A673 (cell line): ENCODE measurements at regions of chr16 and their contacts with region 1.

Region 1: GRCh38 chr16:3027945-3028712 is 4.3 kb downstream of the THOC6 start:
- DNase-seq: peak; percentile 90
- H3K4me3 ChIP-seq: no peak overlapping the region
- H3K27ac ChIP-seq: no peak overlapping the region
- H3K4me1 ChIP-seq: peaks cover 17% of the 10 kb centered on the region
- H3K27me3 ChIP-seq: peaks cover 31% of the 10 kb centered on the region
- CTCF ChIP-seq: peak; percentile 93

Region 2: GRCh38 chr16:3003582-3004302 is 24.4 kb before region 1 on chr16:
- CTCF ChIA-PET with region 1: interaction called, 15 read pairs
- POLR2A ChIA-PET with region 1: no interaction called
- intact Hi-C with region 1: loop called (anchors 1 kb)
- DNase-seq: peak; percentile 99
- H3K4me3 ChIP-seq: no peak overlapping the region
- H3K27ac ChIP-seq: no peak overlapping the region
- H3K4me1 ChIP-seq: peaks cover 4% of the 10 kb centered on the region
- H3K27me3 ChIP-seq: peaks cover 67% of the 10 kb centered on the region
- CTCF ChIP-seq: peak; percentile 72

Region 3: DNA sequence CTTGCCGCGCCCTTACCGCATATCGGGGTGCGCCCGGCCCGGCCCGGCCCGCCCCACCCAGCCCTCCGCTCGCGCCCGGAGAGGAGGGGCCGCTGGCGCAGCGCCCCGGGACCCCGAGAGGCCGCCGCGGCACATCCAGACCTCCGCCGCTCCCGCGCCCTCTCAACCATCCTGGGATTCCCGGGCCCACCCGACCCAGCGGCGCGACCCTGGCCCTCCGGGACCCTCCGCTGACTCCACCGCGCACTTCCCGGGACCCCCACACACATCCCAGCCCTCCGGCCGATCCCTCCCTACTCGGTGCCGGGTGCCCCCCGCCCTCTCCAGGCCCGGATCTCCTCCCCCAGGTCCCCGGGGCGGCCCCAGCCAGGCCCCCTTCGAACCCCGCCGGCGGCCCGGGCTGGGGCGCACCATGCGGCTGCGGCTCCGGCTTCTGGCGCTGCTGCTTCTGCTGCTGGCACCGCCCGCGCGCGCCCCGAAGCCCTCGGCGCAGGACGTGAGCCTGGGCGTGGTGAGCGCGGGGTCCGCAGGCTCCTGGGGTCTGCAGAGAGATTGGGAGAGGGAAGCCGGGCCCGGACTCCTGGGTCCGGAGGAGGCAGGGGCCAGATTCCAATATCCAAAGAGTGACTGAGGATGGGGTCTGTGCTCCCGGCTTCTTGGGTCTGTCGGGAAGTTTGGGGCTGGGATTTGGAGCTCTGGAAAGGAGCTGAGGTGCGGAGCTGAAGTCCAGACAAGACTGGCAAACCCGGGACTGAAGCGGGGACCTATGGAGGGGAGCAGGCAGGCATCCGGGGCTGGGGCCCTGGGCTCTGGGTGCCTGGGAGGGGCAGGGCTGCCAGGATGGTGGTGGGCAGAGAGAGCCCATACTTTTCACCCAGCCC is 18.6 kb after region 1 on chr16 and contains the start of gene MMP25:
- CTCF ChIA-PET with region 1: interaction called, 15 read pairs
- POLR2A ChIA-PET with region 1: no interaction called
- intact Hi-C with region 1: no loop called
- DNase-seq: no peak
- H3K4me3 ChIP-seq: peak within 1 kb of the TSS; percentile 51
- H3K27ac ChIP-seq: no peak within 1 kb of the TSS
- H3K4me1 ChIP-seq: no peaks in the 10 kb centered on the region
- H3K27me3 ChIP-seq: peaks cover 20% of the 10 kb centered on the region
- CTCF ChIP-seq: no peak
- total RNA-seq, gene MMP25: 0.80 and 1.3 TPM in 2 replicates

Region 4: DNA sequence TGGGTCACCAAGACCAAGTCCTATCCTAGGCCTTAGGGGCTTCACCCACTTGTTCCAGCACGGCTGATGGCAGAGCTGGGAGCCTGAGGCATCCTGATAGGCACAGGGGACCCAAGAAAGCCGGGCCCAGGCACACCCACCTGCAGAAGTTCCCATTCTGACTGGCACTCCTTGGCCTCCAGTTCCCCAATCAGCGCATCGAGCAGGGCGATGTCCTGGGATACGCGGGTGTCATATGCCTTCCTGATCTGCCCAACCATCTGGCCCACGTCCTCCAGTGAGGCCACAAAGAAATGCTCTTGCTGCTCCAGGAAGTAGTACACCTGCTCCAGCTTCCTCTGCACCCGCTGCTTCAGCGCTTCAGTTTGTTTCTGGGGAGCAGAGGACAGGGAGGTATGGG is 218.7 kb after region 1 on chr16:
- CTCF ChIA-PET with region 1: no interaction called
- POLR2A ChIA-PET with region 1: no interaction called
- intact Hi-C with region 1: no loop called
- DNase-seq: no peak
- H3K4me3 ChIP-seq: no peak overlapping the region
- H3K27ac ChIP-seq: no peak overlapping the region
- H3K4me1 ChIP-seq: no peaks in the 10 kb centered on the region
- H3K27me3 ChIP-seq: no peaks in the 10 kb centered on the region
- CTCF ChIP-seq: no peak

Region 5: DNA sequence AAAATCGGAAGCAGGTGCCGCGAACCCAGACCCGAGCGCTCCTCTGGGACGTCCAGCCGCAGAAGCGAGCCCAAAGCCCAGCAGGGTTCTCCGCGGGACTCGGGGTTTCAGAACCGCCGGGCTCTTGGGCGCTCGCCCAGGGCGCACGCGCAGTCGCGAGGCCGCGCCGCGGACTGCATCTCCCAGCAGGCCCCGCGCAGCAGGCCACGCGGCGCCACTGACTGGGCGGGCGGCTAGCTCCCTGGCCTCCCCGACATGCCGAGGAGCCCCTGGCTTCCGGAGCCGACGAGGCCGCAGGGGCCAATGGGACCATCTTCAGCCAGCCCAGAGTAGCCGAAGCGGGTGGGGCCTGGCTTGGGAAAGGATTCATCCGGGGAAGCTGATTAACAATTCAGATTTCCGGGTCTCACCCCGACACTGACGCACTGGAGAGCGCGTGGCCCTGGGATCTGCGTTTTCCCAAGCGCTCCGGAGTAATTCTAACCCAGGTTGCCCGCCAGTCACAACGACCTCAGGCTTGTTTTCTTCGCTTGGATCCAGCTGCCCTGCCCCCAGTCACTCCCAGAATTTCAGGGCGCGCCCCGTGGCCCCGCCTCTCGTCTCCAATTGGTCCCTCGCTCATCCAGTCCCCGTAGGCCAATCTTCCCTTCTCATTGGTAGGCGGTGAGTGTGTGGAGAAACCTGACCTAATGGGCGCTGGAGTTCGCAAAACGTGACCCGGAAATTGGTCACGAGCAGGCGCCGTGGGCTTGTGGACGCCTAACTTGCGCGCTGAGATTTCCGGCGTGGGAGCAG is 254.8 kb after region 1 on chr16 and contains the start of gene ZNF263:
- CTCF ChIA-PET with region 1: no interaction called
- POLR2A ChIA-PET with region 1: no interaction called
- intact Hi-C with region 1: no loop called
- DNase-seq: peak; percentile 98
- H3K4me3 ChIP-seq: peak within 1 kb of the TSS; percentile 71
- H3K27ac ChIP-seq: peak within 1 kb of the TSS; percentile 99
- H3K4me1 ChIP-seq: peaks cover 4% of the 10 kb centered on the region
- H3K27me3 ChIP-seq: no peaks in the 10 kb centered on the region
- CTCF ChIP-seq: no peak
- total RNA-seq, gene ZNF263: 30.0 and 34.8 TPM in 2 replicates